SK-N-SH (cell line): ENCODE measurements at regions of chr1 and their contacts with region 1.

Region 1: DNA sequence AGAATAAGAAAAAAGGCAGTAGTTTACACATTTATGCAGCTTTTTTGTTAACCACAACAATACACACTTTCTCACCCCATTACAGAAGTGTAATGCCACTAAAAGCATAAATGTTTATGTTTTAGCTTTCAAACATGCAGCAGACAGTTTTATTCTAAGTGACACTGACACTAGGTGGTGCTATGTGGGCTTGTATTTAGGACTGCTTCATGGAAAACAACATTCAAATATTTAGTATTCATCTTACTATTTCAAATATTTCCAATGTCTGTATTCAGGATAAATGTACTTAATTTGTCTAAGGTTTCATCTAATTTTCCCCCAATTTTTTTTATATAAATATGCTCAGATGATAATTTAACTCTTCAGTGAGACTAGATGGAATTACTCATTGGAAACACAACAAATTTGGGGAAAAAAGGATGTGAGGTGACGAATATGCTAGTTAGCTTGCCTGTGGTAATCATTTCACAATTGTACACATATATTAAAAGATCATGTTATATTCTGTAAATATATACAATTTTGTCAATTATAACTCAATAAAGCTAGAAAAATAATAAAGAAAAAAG is 71.4 kb downstream of the USP1 start:
- DNase-seq: peak; percentile 33
- H3K4me3 ChIP-seq: no peak overlapping the region
- H3K27ac ChIP-seq: no peak overlapping the region
- H3K4me1 ChIP-seq: no peaks in the 10 kb centered on the region; a peak in 2 of 4 replicates
- H3K27me3 ChIP-seq: no peaks in the 10 kb centered on the region
- CTCF ChIP-seq: peak; percentile 75
- EP300 ChIP-seq: no peak
- RAD21 ChIP-seq: peak; percentile 77

Region 2: GRCh38 chr1:62523860-62524259 is 15.6 kb after region 1 on chr1:
- CTCF ChIA-PET with region 1: interaction called, 15 read pairs
- POLR2A ChIA-PET with region 1: no interaction called
- DNase-seq: no peak
- H3K4me3 ChIP-seq: no peak overlapping the region
- H3K27ac ChIP-seq: no peak overlapping the region
- H3K4me1 ChIP-seq: no peaks in the 10 kb centered on the region
- H3K27me3 ChIP-seq: no peaks in the 10 kb centered on the region
- CTCF ChIP-seq: no peak
- EP300 ChIP-seq: no peak
- RAD21 ChIP-seq: no peak

Region 3: GRCh38 chr1:62530516-62531154 is 22.4 kb after region 1 on chr1:
- CTCF ChIA-PET with region 1: interaction called, 15 read pairs
- POLR2A ChIA-PET with region 1: no interaction called
- DNase-seq: peak; percentile 11
- H3K4me3 ChIP-seq: no peak overlapping the region
- H3K27ac ChIP-seq: no peak overlapping the region
- H3K4me1 ChIP-seq: no peaks in the 10 kb centered on the region
- H3K27me3 ChIP-seq: no peaks in the 10 kb centered on the region
- CTCF ChIP-seq: peak; percentile 60
- EP300 ChIP-seq: no peak
- RAD21 ChIP-seq: peak; percentile 68

Region 4: DNA sequence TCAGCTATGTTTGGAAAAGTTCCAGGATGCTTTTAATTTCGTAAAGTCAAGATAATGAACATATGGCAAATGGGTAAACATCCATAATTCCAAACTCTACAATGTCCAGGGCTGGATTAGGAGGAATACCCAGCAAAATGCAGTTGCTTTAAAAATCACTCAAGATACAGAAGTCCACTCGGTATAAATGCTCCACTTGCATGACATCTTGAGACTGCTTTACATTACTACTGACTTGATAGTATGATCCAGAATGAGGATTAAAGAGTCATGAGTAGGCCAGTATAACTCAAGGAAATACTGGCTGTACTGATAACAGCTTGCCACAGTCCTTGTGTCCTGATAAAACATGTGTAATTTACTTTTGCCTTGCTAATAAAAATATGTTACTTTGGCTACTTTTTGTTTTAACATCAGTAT is 30.8 kb after region 1 on chr1:
- CTCF ChIA-PET with region 1: interaction called, 11 read pairs
- POLR2A ChIA-PET with region 1: no interaction called
- DNase-seq: peak; percentile 11
- H3K4me3 ChIP-seq: no peak overlapping the region
- H3K27ac ChIP-seq: peak overlapping the region in 1 of 2 experiments; percentile 28; a peak in 2 of 4 replicates
- H3K4me1 ChIP-seq: peaks cover 0 to 2% of the 10 kb centered on the region in 2 experiments; a peak in 1 of 4 replicates
- H3K27me3 ChIP-seq: no peaks in the 10 kb centered on the region
- CTCF ChIP-seq: no peak
- EP300 ChIP-seq: no peak
- RAD21 ChIP-seq: no peak

Region 5: DNA sequence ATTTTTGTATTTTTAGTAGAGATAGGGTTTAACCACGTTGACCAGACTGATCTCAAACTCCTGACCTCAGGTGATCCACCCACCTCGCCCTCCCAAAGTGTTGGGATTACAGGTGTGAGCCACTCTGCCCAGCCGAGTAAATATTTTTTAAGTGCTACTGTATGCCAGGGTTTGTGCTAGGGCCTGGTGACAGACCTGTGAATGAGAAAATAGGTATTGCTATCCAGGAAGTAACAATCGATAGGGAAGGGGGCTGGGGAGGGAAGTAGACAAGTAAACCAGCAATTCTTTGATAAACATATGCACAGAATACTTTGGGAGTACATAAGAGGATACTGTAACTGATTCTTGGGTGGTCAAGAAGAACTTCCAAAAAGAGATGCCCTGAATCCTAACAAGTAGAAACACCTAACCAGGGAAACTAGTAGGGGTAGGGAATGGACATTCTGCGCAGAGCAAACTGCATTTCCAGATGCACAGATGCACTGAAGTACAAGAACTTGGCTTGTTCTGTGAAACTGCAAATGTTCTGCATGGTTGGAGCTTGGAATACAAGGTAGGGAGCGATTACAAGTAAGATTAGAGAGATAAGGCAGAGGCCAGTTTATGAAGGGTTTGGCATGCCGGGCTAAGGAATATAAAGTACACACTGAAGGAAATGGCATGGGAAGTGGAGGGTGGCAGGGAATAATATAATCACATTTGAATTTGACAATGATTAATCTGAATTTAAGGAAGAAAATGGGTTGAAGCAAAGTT is 198.9 kb after region 1 on chr1:
- CTCF ChIA-PET with region 1: interaction called, 12 read pairs
- POLR2A ChIA-PET with region 1: no interaction called
- DNase-seq: no peak
- H3K4me3 ChIP-seq: no peak overlapping the region
- H3K27ac ChIP-seq: no peak overlapping the region
- H3K4me1 ChIP-seq: no peaks in the 10 kb centered on the region; a peak in 1 of 4 replicates
- H3K27me3 ChIP-seq: no peaks in the 10 kb centered on the region
- CTCF ChIP-seq: no peak
- EP300 ChIP-seq: no peak
- RAD21 ChIP-seq: no peak

Region 6: GRCh38 chr1:62727656-62728407 is 219.6 kb after region 1 on chr1:
- CTCF ChIA-PET with region 1: interaction called, 21 read pairs
- POLR2A ChIA-PET with region 1: no interaction called
- DNase-seq: no peak
- H3K4me3 ChIP-seq: no peak overlapping the region
- H3K27ac ChIP-seq: peak overlapping the region in 1 of 2 experiments; percentile 33; a peak in 2 of 4 replicates
- H3K4me1 ChIP-seq: peaks cover 9 to 26% of the 10 kb centered on the region in 2 experiments; a peak in 3 of 4 replicates
- H3K27me3 ChIP-seq: no peaks in the 10 kb centered on the region
- CTCF ChIP-seq: no peak
- EP300 ChIP-seq: no peak
- RAD21 ChIP-seq: no peak

Region 7: DNA sequence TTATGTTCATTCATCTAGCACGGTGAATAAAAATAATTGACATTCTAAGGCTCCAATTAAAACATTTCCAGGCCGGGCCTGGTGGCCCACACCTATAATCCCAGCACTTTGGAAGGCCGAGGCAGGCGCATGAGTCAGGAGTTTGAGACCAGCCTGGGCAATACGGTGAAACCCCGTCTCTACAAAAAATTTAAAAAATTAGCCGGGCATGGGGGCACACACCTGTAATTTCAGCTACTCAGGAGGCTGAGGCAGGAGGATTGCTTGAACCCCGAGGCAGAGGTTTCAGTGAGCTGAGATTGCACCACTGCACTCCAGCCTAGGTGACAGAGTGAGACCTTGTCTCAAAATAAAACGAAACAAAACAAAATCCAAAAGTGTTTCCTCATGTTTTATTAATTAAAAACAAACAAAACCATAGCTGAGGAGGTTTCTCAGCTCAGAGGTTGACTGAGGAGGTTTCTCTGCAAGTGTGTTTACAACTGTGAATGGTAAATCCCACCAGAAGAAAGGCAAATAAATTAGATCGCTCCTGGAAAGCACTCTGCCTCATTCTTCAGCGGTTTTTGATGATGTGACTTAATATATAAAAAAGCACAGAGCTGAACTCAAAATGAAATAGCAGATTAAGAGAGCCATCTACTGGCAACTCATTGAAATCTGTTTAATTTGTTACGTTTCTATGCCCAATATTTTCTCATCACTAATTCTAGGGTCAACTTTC is 238.0 kb after region 1 on chr1:
- CTCF ChIA-PET with region 1: interaction called, 121 read pairs
- POLR2A ChIA-PET with region 1: no interaction called
- DNase-seq: peak; percentile 56
- H3K4me3 ChIP-seq: no peak overlapping the region; a peak in 1 of 4 replicates
- H3K27ac ChIP-seq: no peak overlapping the region
- H3K4me1 ChIP-seq: no peaks in the 10 kb centered on the region
- H3K27me3 ChIP-seq: no peaks in the 10 kb centered on the region
- CTCF ChIP-seq: peak; percentile 81
- EP300 ChIP-seq: no peak
- RAD21 ChIP-seq: peak; percentile 92